ENCODE measurements at regions of chr3 and their contacts with region 1.

Region 1: GRCh38 chr3:193572426-193572908 is 17.8 kb upstream of the ATP13A4 start:
- DNase-seq: peak; percentile 80
- H3K4me3 Mint-ChIP-seq: no peak overlapping the region
- H3K27ac Mint-ChIP-seq: no peak overlapping the region
- H3K4me1 Mint-ChIP-seq: peaks cover 10% of the 10 kb centered on the region
- H3K27me3 Mint-ChIP-seq: peaks cover 13% of the 10 kb centered on the region
- CTCF ChIP-seq: peak; percentile 78

Region 2: GRCh38 chr3:192467230-192468140 is 1105.0 kb before region 1 on chr3:
- CTCF ChIA-PET with region 1: interaction called, 4 read pairs
- POLR2A ChIA-PET with region 1: no interaction called
- intact Hi-C with region 1: loop called (anchors 5 kb)
- DNase-seq: peak; percentile 72
- H3K4me3 Mint-ChIP-seq: no peak overlapping the region
- H3K27ac Mint-ChIP-seq: no peak overlapping the region
- H3K4me1 Mint-ChIP-seq: no peaks in the 10 kb centered on the region
- H3K27me3 Mint-ChIP-seq: peaks cover 82% of the 10 kb centered on the region
- CTCF ChIP-seq: peak; percentile 94

Region 3: GRCh38 chr3:192917404-192918274 is 654.8 kb before region 1 on chr3 and contains the start of gene MB21D2:
- CTCF ChIA-PET with region 1: interaction called, 6 read pairs
- POLR2A ChIA-PET with region 1: no interaction called
- intact Hi-C with region 1: loop called (anchors 2 kb)
- DNase-seq: peak; percentile 72
- H3K4me3 Mint-ChIP-seq: peak within 1 kb of the TSS; percentile 85
- H3K27ac Mint-ChIP-seq: peak within 1 kb of the TSS; percentile 35
- H3K4me1 Mint-ChIP-seq: peaks cover 22% of the 10 kb centered on the region
- H3K27me3 Mint-ChIP-seq: no peaks in the 10 kb centered on the region
- CTCF ChIP-seq: no peak
- total RNA-seq, gene MB21D2: 3.6 and 4.4 TPM in 2 replicates

Region 4: GRCh38 chr3:193457526-193457925 is 114.9 kb before region 1 on chr3:
- CTCF ChIA-PET with region 1: interaction called, 49 read pairs
- POLR2A ChIA-PET with region 1: interaction called, 3 read pairs
- intact Hi-C with region 1: loop called (anchors 1 kb)
- DNase-seq: no peak
- H3K4me3 Mint-ChIP-seq: no peak overlapping the region
- H3K27ac Mint-ChIP-seq: no peak overlapping the region
- H3K4me1 Mint-ChIP-seq: no peaks in the 10 kb centered on the region
- H3K27me3 Mint-ChIP-seq: peaks cover 72% of the 10 kb centered on the region
- CTCF ChIP-seq: no peak

Region 5: GRCh38 chr3:193585530-193585929 is 13.1 kb after region 1 on chr3:
- CTCF ChIA-PET with region 1: interaction called, 23 read pairs
- POLR2A ChIA-PET with region 1: interaction called, 4 read pairs
- intact Hi-C with region 1: no loop called
- DNase-seq: no peak
- H3K4me3 Mint-ChIP-seq: peak overlapping the region; percentile 40
- H3K27ac Mint-ChIP-seq: peak overlapping the region; percentile 54
- H3K4me1 Mint-ChIP-seq: peaks cover 8% of the 10 kb centered on the region
- H3K27me3 Mint-ChIP-seq: no peaks in the 10 kb centered on the region
- CTCF ChIP-seq: no peak

Region 6: GRCh38 chr3:193743702-193744047 is 171.2 kb after region 1 on chr3:
- CTCF ChIA-PET with region 1: no interaction called
- POLR2A ChIA-PET with region 1: no interaction called
- intact Hi-C with region 1: no loop called
- DNase-seq: peak; percentile 6
- H3K4me3 Mint-ChIP-seq: no peak overlapping the region
- H3K27ac Mint-ChIP-seq: no peak overlapping the region
- H3K4me1 Mint-ChIP-seq: no peaks in the 10 kb centered on the region
- H3K27me3 Mint-ChIP-seq: peaks cover 13% of the 10 kb centered on the region
- CTCF ChIP-seq: no peak

Measured in MCF 10A (cell line).